Left ventricle myocardium inferior (tissue), 1 donor: ENCODE measurements at regions of chr12 and their contacts with region 1.

Region 1: DNA sequence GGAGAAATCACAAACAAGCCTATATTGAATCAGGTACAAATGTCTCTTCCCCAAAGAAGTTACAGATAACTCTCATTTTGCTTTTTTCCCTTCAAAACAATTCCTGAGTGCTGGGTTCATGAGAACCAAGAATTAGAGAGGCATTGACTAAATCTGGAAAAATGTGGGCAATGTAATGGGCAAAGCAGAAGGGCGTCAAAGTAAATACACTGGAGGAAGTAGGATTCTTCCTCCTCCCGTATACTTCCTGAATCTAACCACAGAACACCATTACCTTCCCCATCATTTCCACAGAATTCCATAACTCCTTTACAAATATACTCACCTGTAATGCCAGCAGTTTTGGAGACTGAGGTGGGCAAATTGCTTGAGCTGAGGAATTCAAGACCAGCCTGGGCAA is 3.0 kb upstream of the RBMS2 start:
- DNase-seq: no peak
- H3K4me3 ChIP-seq: no peak overlapping the region
- H3K27ac ChIP-seq: peak overlapping the region; percentile 91
- H3K4me1 ChIP-seq: peaks cover 50% of the 10 kb centered on the region
- H3K27me3 ChIP-seq: no peaks in the 10 kb centered on the region
- CTCF ChIP-seq: no peak

Region 2: GRCh38 chr12:56572288-56572687 is 53.7 kb after region 1 on chr12:
- intact Hi-C with region 1: loop called (anchors 2 kb)
- DNase-seq: no peak
- H3K4me3 ChIP-seq: no peak overlapping the region
- H3K27ac ChIP-seq: peak overlapping the region; percentile 48
- H3K4me1 ChIP-seq: peaks cover 41% of the 10 kb centered on the region
- H3K27me3 ChIP-seq: no peaks in the 10 kb centered on the region
- CTCF ChIP-seq: no peak